PC-3 (cell line): ENCODE measurements at regions of chr1 and their contacts with region 1.

Region 1: GRCh38 chr1:87167848-87168525 is 160.7 kb upstream of the LMO4 start:
- DNase-seq: no peak
- ATAC-seq: no peak
- H3K4me3 ChIP-seq: no peak overlapping the region
- H3K27ac ChIP-seq: no peak overlapping the region
- H3K4me1 ChIP-seq: no peaks in the 10 kb centered on the region
- H3K27me3 ChIP-seq: peaks cover 32% of the 10 kb centered on the region; the same call in 1 of the 2 replicates
- CTCF ChIP-seq: peak; percentile 53

Region 2: GRCh38 chr1:87113313-87113712 is 54.7 kb before region 1 on chr1:
- CTCF ChIA-PET with region 1: no interaction called
- POLR2A ChIA-PET with region 1: interaction called, 15 read pairs
- intact Hi-C with region 1: no loop called
- DNase-seq: no peak
- ATAC-seq: no peak
- H3K4me3 ChIP-seq: no peak overlapping the region
- H3K27ac ChIP-seq: no peak overlapping the region
- H3K4me1 ChIP-seq: peaks cover 38% of the 10 kb centered on the region
- H3K27me3 ChIP-seq: no peaks in the 10 kb centered on the region
- CTCF ChIP-seq: no peak

Region 3: DNA sequence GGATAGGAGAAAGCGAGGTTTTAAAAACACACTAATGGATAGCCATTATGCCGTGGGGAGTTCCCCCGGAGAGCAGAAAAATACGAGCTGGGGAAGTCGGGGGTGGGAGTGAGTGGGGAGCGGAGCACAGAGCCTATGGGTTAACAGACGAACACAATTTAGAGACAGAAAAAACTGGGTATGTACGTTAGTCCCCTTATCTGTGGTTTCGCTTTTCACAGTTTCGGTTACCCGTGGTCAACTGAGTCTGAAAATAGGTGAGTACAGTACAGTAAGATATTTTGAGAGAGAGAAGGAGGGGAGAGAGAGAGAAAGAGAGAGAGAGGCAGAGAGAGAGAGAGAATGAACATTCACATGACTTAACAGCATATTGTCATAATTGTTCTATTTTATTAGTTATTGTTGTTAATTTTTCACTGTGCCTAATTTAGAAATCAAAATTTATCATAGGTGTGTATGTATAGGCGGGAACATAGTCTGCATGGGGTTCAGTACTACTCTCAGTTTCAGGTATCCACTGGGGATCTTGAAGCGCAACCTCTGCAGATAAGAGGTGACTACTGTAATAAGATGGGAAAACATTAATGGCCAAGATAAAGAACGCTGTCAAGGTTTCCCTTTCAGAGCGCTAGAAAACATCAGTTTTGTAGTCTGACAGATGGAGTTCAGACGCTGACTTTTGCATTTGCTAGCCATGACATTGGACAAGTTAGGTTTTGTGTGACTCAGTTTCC is 35.1 kb after region 1 on chr1:
- CTCF ChIA-PET with region 1: no interaction called
- POLR2A ChIA-PET with region 1: no interaction called
- intact Hi-C with region 1: no loop called
- DNase-seq: no peak
- ATAC-seq: no peak
- H3K4me3 ChIP-seq: no peak overlapping the region
- H3K27ac ChIP-seq: no peak overlapping the region
- H3K4me1 ChIP-seq: peaks cover 24% of the 10 kb centered on the region
- H3K27me3 ChIP-seq: no peaks in the 10 kb centered on the region
- CTCF ChIP-seq: no peak

Region 4: GRCh38 chr1:87730274-87731216 is 562.6 kb after region 1 on chr1:
- CTCF ChIA-PET with region 1: no interaction called
- POLR2A ChIA-PET with region 1: no interaction called
- intact Hi-C with region 1: no loop called
- DNase-seq: no peak
- ATAC-seq: no peak
- H3K4me3 ChIP-seq: no peak overlapping the region
- H3K27ac ChIP-seq: no peak overlapping the region
- H3K4me1 ChIP-seq: no peaks in the 10 kb centered on the region
- H3K27me3 ChIP-seq: no peaks in the 10 kb centered on the region
- CTCF ChIP-seq: no peak